Dorsolateral prefrontal cortex (tissue), 120 donors: ENCODE measurements at regions of chr1 and their contacts with region 1.

Region 1: GRCh38 chr1:37434292-37434907 is 40.0 kb upstream of the ZC3H12A start:
- DNase-seq: peak; percentile 61 to 86 (median 77)
- H3K4me3 ChIP-seq: no peak overlapping the region
- H3K27ac ChIP-seq: no peak overlapping the region
- H3K27me3 ChIP-seq: peaks cover 0 to 11% (median 0%) of the 10 kb centered on the region in 45 donors
- CTCF ChIP-seq: peak; percentile 85 to 99 (median 96)

Region 2: GRCh38 chr1:36576118-36576517 is 858.3 kb before region 1 on chr1:
- intact Hi-C with region 1: loop called in 1 of 2 experiments (anchors 10 kb)
- DNase-seq: peak in 8 of 10 donors; percentile 34 to 70 (median 50)
- H3K4me3 ChIP-seq: no peak overlapping the region
- H3K27ac ChIP-seq: no peak overlapping the region
- H3K27me3 ChIP-seq: peaks cover 0 to 41% (median 9%) of the 10 kb centered on the region in 45 donors
- CTCF ChIP-seq: peak; percentile 24 to 84 (median 73)

Region 3: GRCh38 chr1:37133276-37134145 is 300.9 kb before region 1 on chr1:
- intact Hi-C with region 1: loop called (anchors 5 kb)
- DNase-seq: peak in 8 of 10 donors; percentile 26 to 72 (median 52)
- H3K4me3 ChIP-seq: peak overlapping the region in 4 of 59 donors; percentile 0 to 31 (median 10)
- H3K27ac ChIP-seq: peak overlapping the region in 45 of 59 donors; percentile 13 to 87 (median 62)
- H3K27me3 ChIP-seq: no peaks in the 10 kb centered on the region
- CTCF ChIP-seq: no peak

Region 4: GRCh38 chr1:37234941-37235418 is 199.4 kb before region 1 on chr1:
- intact Hi-C with region 1: loop called in 1 of 2 experiments (anchors 10 kb)
- DNase-seq: peak in 5 of 10 donors; percentile 26 to 70 (median 52)
- H3K4me3 ChIP-seq: peak overlapping the region in 6 of 59 donors; percentile 2 to 33 (median 14)
- H3K27ac ChIP-seq: peak overlapping the region in 9 of 59 donors; percentile 1 to 59 (median 31)
- H3K27me3 ChIP-seq: peaks cover 0 to 3% (median 0%) of the 10 kb centered on the region in 45 donors
- CTCF ChIP-seq: peak in 3 of 56 donors; percentile 8 to 41 (median 10)

Region 5: GRCh38 chr1:37323486-37324377 is 110.7 kb before region 1 on chr1:
- intact Hi-C with region 1: loop called in 1 of 2 experiments (anchors 5 kb)
- DNase-seq: no peak
- H3K4me3 ChIP-seq: no peak overlapping the region
- H3K27ac ChIP-seq: no peak overlapping the region
- H3K27me3 ChIP-seq: peaks cover 0 to 11% (median 0%) of the 10 kb centered on the region in 45 donors
- CTCF ChIP-seq: peak in 51 of 56 donors; percentile 15 to 60 (median 44)